ENCODE measurements at regions of chr9 and their contacts with region 1.

Region 1: GRCh38 chr9:109986521-109986991 is 206.6 kb downstream of the PALM2AKAP2 start:
- DNase-seq: no peak
- H3K4me3 ChIP-seq: no peak overlapping the region
- H3K27ac ChIP-seq: peak overlapping the region; percentile 72 to 74
- H3K4me1 ChIP-seq: peaks cover 0 to 30% of the 10 kb centered on the region in 2 donors
- H3K27me3 ChIP-seq: no peaks in the 10 kb centered on the region
- CTCF ChIP-seq: no peak

Region 2: DNA sequence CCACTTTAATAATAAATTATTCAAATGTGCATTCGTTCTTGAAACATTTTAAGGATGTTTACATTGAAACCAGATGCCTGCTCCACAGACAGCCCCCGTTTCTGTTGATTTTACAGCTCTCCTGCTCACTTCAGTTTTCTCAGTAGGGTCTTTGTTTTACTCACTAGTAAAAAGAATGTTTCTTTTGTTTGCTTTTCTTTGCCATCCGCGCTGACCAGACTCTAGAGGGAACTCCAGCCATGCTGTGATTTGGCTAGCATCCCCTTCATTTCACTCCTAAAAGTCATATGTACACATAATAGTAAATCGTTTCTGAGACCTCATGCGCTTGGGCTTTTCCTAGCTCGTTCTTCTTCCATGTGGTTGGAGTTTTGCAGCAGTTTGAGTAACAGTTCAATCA is 235.3 kb before region 1 on chr9:
- intact Hi-C with region 1: no loop called
- DNase-seq: no peak
- H3K4me3 ChIP-seq: peak overlapping the region in 1 of 2 donors; percentile 22
- H3K27ac ChIP-seq: no peak overlapping the region
- H3K4me1 ChIP-seq: peaks cover 0 to 13% of the 10 kb centered on the region in 2 donors
- H3K27me3 ChIP-seq: no peaks in the 10 kb centered on the region
- CTCF ChIP-seq: no peak

Region 3: GRCh38 chr9:110029429-110029955 is 42.9 kb after region 1 on chr9:
- intact Hi-C with region 1: loop called (anchors 5 kb)
- DNase-seq: peak in 1 of 2 donors; percentile 70
- H3K4me3 ChIP-seq: no peak overlapping the region
- H3K27ac ChIP-seq: peak overlapping the region; percentile 48 to 50
- H3K4me1 ChIP-seq: peaks cover 6 to 57% of the 10 kb centered on the region in 2 donors
- H3K27me3 ChIP-seq: no peaks in the 10 kb centered on the region
- CTCF ChIP-seq: no peak

Region 4: GRCh38 chr9:110040788-110041187 is 54.2 kb after region 1 on chr9:
- intact Hi-C with region 1: no loop called
- DNase-seq: no peak
- H3K4me3 ChIP-seq: no peak overlapping the region
- H3K27ac ChIP-seq: peak overlapping the region; percentile 26 to 54
- H3K4me1 ChIP-seq: peaks cover 3 to 17% of the 10 kb centered on the region in 2 donors
- H3K27me3 ChIP-seq: no peaks in the 10 kb centered on the region
- CTCF ChIP-seq: no peak

Region 5: GRCh38 chr9:110050925-110051355 is 64.4 kb after region 1 on chr9:
- intact Hi-C with region 1: loop called (anchors 5 kb)
- DNase-seq: peak in 1 of 2 donors; percentile 72
- H3K4me3 ChIP-seq: peak overlapping the region in 1 of 2 donors; percentile 74
- H3K27ac ChIP-seq: peak overlapping the region; percentile 55 to 70
- H3K4me1 ChIP-seq: peaks cover 0 to 15% of the 10 kb centered on the region in 2 donors
- H3K27me3 ChIP-seq: no peaks in the 10 kb centered on the region
- CTCF ChIP-seq: no peak

Measured in ascending aorta (tissue), 2 donors.